Heart right ventricle (tissue), 16 donors: ENCODE measurements at regions of chr3 and their contacts with region 1.

Region 1: DNA sequence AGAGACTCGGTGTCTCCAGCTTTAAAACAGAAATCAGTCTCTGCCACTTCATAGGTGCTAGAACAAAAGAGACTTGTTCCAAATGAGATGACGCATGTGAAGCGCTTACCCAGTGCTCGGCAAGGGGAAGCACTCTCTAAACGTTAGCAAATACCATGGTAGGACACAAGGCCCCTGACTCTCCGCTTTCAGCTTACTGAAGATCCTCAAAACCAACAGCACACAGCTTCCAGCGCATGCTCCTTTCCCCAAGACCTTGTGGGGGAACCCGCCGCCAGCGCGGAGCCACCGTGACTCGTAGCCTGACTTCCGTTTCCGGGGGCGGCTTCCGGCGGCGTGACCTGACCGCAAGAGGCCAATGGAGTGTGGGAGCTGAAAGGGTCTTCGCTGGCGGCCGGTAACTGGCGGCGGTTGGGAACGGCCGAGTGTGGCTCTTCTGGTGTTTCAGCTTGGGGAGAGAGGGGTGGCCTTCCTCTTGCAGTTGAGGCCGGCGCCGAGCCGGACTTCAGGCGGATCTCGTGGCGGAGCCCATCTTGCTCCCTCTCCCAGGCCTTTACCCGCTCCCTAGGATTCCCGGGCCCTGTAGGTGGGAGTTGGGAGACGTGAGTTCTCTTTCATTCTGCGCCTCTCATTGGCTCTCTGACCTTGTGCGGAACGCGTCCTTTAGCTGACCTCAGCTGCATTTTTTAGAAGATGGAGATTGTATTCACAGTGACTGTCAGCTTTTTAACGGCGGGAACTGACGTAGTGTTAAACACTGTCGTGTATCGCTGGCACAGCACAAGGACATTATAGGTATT is at the start of gene THUMPD3:
- DNase-seq: peak; percentile 90
- ATAC-seq: peak; percentile 97 to 100 (median 99)
- H3K4me3 ChIP-seq: peak within 1 kb of the TSS; percentile 40 to 90 (median 71)
- H3K27ac ChIP-seq: peak within 1 kb of the TSS; percentile 23 to 95 (median 90)
- H3K4me1 ChIP-seq: peaks cover 0 to 31% (median 19%) of the 10 kb centered on the region in 9 donors
- H3K27me3 ChIP-seq: no peaks in the 10 kb centered on the region
- CTCF ChIP-seq: no peak
- total RNA-seq, gene THUMPD3: 40.3 to 72.1 (median 52.5) TPM

Region 2: DNA sequence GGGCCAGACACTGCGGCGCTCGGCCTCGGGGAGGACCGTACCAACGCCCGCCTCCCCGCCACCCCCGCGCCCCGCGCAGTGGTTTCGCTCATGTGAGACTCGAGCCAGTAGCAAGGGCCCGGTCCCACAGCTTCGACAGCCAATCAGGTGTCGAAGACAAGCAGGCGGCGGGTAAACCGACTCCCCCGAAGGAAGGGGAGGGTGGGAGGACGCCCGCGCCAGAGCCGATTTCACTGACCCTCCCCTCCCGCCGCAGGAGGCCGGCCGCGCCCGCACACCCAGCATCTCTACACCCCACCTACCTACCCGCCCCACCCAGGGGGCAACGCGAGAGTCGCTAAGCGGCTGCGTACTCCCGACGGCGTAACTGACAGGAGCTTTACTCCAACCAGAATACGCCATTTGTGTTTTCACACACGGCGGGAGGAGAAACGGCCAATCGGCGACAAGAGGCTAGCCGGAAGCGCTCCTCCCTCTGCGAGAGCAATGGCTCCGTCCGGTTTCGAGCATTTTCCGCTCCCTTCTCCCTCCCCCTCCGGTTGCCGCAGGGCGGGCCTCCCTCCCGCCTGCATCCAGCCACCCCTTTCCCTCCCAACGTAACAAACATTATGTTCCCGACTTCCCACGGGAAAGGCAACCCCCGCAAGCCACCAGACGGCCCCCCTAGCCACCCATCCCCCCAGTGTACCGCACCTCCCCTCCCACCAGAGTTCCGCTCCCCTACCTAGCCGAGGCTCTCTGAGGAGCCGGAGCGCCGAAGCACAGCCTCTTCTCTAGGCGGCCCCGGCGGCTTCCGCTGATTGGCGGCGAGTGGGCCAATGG is 34.0 kb after region 1 on chr3:
- intact Hi-C with region 1: loop called in 4 of 10 experiments (anchors 2 to 5 kb)
- DNase-seq: peak; percentile 98
- ATAC-seq: peak; percentile 85 to 95 (median 91)
- H3K4me3 ChIP-seq: peak overlapping the region; percentile 49 to 97 (median 90)
- H3K27ac ChIP-seq: peak overlapping the region; percentile 90 to 99 (median 99)
- H3K4me1 ChIP-seq: peaks cover 16 to 77% (median 67%) of the 10 kb centered on the region in 9 donors
- H3K27me3 ChIP-seq: no peaks in the 10 kb centered on the region
- CTCF ChIP-seq: peak in 1 of 9 donors; percentile 3

Region 3: DNA sequence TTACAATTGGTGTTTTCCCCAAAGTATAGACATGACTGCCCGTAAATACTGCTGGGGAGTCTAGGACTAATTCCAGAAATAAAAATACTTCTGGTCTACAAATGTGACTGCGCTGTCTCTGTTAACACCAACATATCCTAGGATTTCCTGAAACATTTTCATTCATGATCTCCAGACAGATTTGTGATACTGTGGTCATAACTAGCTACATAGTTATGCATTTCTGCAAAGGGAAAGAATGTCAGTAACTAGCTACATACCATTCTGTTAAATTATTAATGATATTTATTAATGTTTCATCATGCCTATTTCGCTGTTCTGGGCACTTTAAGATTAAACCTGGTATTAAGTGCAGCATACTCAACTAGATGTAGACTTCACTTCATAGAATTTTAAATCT is 67.8 kb after region 1 on chr3:
- intact Hi-C with region 1: loop called in 4 of 10 experiments (anchors 5 to 10 kb)
- DNase-seq: no peak
- ATAC-seq: no peak
- H3K4me3 ChIP-seq: no peak overlapping the region
- H3K27ac ChIP-seq: no peak overlapping the region
- H3K4me1 ChIP-seq: peaks cover 0 to 31% (median 4%) of the 10 kb centered on the region in 9 donors
- H3K27me3 ChIP-seq: no peaks in the 10 kb centered on the region
- CTCF ChIP-seq: no peak